Activated naive CD4-positive, alpha-beta T cell treated with anti-CD3 and anti-CD28 coated beads for 36 hours (primary cell): ENCODE measurements at regions of chr9 and their contacts with region 1.

Region 1: DNA sequence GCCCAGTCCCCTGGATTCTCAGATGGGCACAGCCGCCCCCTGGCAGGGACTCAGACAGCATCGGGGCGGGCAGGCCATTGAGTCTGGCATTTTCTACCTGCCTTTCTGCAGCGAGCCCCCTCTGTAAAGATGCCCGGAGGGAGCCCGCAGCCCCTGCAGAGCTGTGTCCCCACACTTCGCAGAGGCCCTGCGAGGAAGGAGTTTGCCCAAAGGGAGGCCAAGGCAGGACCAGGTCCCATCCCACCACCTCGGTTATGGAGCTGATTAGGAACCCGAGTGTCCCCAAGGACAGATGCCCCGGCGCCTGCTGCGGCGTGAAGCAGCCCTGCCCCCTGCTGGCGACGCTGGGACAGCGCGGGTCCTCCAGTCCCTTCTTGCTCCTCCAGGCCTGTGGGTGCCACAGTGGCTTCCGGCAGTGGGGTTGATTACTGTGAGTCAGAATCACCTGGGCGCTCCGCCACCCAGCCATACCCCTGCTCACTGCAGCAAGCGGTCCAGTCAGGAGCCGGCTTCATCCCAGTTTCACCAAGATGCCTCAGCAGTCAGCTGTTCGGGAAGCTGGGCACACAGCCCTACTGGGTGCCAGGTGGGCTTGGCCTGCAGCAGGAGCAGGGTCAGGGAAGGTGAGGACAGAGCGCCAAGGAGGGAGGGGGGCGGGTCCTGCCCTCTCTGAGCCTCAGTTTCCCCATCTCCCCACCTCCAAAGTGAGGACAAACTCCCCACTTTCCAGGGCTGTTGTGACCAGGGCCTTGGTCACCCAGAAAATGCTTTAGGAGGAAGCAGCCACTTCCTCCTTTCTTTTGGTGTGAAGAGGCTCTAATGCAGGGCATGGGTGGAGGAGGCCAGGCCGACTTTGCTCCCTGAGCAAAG is 117.1 kb downstream of the RXRA start:
- DNase-seq: peak; percentile 92
- H3K4me3 Mint-ChIP-seq: no peak overlapping the region
- H3K27ac Mint-ChIP-seq: no peak overlapping the region
- H3K4me1 Mint-ChIP-seq: peaks cover 12% of the 10 kb centered on the region
- H3K27me3 Mint-ChIP-seq: peaks cover 10% of the 10 kb centered on the region

Region 2: DNA sequence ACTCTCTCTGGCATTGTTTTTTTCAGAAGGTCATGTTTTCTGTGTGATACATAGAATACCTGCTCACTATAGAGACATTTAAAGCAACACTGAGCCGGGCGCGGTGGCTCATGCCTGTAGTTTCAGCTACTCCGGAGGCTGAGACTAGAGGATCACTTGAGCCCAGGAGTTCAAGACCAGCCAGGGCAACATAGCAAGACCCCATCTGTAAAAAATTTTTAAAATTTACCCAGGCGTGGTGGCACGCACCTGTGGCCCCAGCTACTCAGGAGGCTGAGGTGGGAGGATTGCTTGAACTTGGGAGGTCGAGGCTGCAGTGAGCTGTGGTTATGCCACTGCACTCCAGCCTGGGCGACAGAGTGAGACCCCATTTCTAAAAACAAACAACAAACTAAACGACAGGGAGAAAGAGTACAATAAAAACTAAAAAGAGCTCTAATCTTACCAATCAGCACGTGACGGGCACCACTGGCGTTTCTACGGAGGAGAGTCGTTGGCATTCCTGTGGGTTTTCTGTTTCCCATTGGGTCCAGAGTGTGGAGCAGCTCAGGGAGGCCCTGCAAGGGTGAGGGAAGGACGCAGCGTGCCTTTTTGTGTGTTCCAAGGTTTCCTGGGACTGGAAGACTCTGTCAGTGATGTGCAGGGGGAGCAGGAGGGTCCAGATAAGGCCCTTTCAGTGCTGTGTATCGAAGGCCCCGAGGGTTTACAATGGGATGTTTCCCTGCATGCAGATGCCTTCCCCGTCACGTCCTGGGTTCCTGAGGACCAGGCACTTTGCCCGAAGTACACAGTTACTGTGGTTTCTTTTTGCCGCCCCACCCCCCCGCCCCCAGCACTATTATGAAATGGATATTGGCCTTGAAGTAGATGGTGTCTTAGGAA is 271.8 kb before region 1 on chr9:
- CTCF ChIA-PET with region 1: interaction called, 21 read pairs
- intact Hi-C with region 1: loop called (anchors 1 kb)
- DNase-seq: no peak
- H3K4me3 Mint-ChIP-seq: no peak overlapping the region
- H3K27ac Mint-ChIP-seq: no peak overlapping the region
- H3K4me1 Mint-ChIP-seq: peaks cover 2% of the 10 kb centered on the region
- H3K27me3 Mint-ChIP-seq: no peaks in the 10 kb centered on the region

Region 3: DNA sequence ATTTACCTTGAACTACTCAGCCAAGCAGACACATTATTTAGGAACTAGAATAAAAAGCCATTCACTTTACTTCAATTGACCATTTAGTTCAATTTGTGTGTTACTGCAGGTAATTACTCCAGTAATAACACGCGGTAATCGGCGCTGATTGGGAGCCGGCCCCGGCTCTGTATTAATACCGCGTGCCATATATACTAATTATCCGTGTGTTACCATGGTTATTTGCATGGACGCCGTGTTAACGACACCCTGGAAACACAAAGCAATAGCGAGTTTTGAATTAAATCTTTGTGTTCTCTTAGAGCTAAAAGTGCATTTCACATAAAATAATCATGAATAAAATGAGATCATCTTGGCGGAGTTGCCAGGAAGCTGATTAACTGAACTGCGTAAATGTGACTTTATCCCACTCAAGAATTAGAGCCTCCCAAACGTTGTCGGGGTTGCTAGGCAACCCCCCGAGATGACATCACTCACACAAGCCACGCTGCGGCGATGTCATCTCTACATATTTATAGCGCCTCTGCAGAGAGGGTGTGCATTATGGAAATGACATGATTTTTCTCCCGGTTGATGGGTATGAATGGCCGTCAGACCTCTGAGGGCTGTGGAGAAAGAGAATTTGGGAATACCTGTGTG is 237.6 kb before region 1 on chr9:
- CTCF ChIA-PET with region 1: no interaction called
- intact Hi-C with region 1: no loop called
- DNase-seq: no peak
- H3K4me3 Mint-ChIP-seq: no peak overlapping the region
- H3K27ac Mint-ChIP-seq: no peak overlapping the region
- H3K4me1 Mint-ChIP-seq: no peaks in the 10 kb centered on the region
- H3K27me3 Mint-ChIP-seq: no peaks in the 10 kb centered on the region

Region 4: GRCh38 chr9:134243778-134244467 is 199.5 kb before region 1 on chr9:
- CTCF ChIA-PET with region 1: no interaction called
- intact Hi-C with region 1: no loop called
- DNase-seq: peak; percentile 72
- H3K4me3 Mint-ChIP-seq: no peak overlapping the region
- H3K27ac Mint-ChIP-seq: no peak overlapping the region
- H3K4me1 Mint-ChIP-seq: peaks cover 12% of the 10 kb centered on the region
- H3K27me3 Mint-ChIP-seq: no peaks in the 10 kb centered on the region

Region 5: GRCh38 chr9:134365791-134366688 is 77.4 kb before region 1 on chr9:
- CTCF ChIA-PET with region 1: interaction called, 29 read pairs
- intact Hi-C with region 1: loop called (anchors 1 kb)
- DNase-seq: peak; percentile 24
- H3K4me3 Mint-ChIP-seq: no peak overlapping the region
- H3K27ac Mint-ChIP-seq: no peak overlapping the region
- H3K4me1 Mint-ChIP-seq: peaks cover 5% of the 10 kb centered on the region
- H3K27me3 Mint-ChIP-seq: no peaks in the 10 kb centered on the region

Region 6: DNA sequence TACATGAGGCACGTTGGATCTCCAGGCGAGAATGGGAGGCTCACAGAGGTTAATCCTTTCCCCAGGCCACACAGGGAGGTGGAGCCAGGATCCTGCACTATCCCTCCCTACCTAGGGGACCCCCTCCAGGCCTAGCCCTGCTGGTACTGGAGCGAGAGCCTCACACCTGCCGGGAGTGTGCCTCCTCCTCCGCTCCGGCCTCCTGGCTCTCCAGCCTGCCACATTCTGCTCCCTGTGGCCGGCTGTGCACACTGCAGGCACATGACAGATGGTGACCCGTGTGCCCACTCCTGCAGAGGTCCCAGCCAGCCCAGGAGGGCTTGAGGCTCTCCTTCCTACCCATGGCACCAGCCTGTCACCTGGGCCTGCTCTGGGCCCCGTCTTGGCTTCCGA is 23.7 kb before region 1 on chr9:
- CTCF ChIA-PET with region 1: no interaction called
- intact Hi-C with region 1: no loop called
- DNase-seq: no peak
- H3K4me3 Mint-ChIP-seq: no peak overlapping the region
- H3K27ac Mint-ChIP-seq: no peak overlapping the region
- H3K4me1 Mint-ChIP-seq: no peaks in the 10 kb centered on the region
- H3K27me3 Mint-ChIP-seq: no peaks in the 10 kb centered on the region

Region 7: DNA sequence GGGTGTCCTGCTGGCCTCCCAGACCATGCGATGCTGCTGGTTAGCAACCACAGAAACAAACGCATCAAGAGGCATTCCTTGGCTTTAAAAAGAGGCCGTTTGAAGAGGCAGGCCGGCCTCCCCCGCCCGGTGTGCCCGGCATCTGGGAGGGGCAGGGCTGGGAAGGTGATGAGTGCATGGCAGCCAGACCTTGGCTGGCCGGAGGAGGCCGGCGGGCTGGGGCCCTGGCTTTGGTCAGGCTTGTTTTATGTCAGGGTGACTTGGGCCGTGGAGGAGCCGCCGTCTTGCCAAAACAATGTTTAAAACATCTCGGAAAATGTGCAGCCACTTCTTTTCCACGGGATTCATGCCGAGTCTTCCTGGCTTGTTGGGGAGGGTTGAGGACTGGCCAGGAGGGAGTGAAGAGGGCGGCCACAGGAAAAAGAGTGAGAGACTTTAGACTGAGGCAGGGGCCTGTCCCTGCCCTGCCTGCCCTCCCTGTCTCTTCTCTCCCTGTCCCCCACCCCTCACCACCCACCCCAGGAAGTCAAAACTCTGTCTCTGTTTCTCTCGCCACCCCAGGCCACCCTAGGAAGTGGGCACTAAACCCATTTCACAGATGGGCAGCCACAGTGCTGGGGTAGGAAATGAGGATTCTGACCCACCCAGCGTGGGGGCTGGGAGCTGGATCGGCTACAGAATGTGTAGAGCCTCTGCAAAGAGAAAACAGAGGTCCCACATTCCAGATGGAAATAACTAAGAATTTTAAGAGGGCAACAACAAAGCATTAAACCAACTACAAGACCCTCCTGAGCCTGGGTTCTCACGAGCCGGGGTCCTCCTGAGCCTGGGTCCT is 25.9 kb after region 1 on chr9:
- CTCF ChIA-PET with region 1: no interaction called
- intact Hi-C with region 1: no loop called
- DNase-seq: no peak
- H3K4me3 Mint-ChIP-seq: no peak overlapping the region
- H3K27ac Mint-ChIP-seq: no peak overlapping the region
- H3K4me1 Mint-ChIP-seq: no peaks in the 10 kb centered on the region
- H3K27me3 Mint-ChIP-seq: no peaks in the 10 kb centered on the region